Calu3 (cell line): ENCODE measurements at regions of chr15 and their contacts with region 1.

Region 1: GRCh38 chr15:99788183-99788582 is 54.9 kb upstream of the LYSMD4 start:
- DNase-seq: no peak
- H3K4me3 Mint-ChIP-seq: no peak overlapping the region
- H3K27ac Mint-ChIP-seq: no peak overlapping the region
- H3K4me1 Mint-ChIP-seq: no peaks in the 10 kb centered on the region
- H3K27me3 Mint-ChIP-seq: peaks cover 28% of the 10 kb centered on the region
- CTCF ChIP-seq: no peak

Region 2: GRCh38 chr15:101781927-101782326 is 1993.7 kb after region 1 on chr15:
- CTCF ChIA-PET with region 1: no interaction called
- intact Hi-C with region 1: loop called (anchors 10 kb)
- DNase-seq: no peak
- H3K4me3 Mint-ChIP-seq: no peak overlapping the region
- H3K27ac Mint-ChIP-seq: no peak overlapping the region
- H3K4me1 Mint-ChIP-seq: no peaks in the 10 kb centered on the region
- H3K27me3 Mint-ChIP-seq: peaks cover 55% of the 10 kb centered on the region
- CTCF ChIP-seq: no peak